GM12878 (cell line): ENCODE measurements at regions of chr4 and their contacts with region 1.

Region 1: GRCh38 chr4:2220016-2220630 is 21.8 kb downstream of the HAUS3 start:
- DNase-seq: peak; percentile 24
- ATAC-seq: peak; percentile 99
- H3K4me3 ChIP-seq: no peak overlapping the region
- H3K27ac ChIP-seq: no peak overlapping the region
- H3K4me1 ChIP-seq: no peaks in the 10 kb centered on the region
- H3K27me3 ChIP-seq: no peaks in the 10 kb centered on the region
- CTCF ChIP-seq: peak; percentile 93 to 95 (median 93)
- EP300 ChIP-seq: no peak
- POLR2A ChIP-seq: no peak
- RAD21 ChIP-seq: peak; percentile 97

Region 2: DNA sequence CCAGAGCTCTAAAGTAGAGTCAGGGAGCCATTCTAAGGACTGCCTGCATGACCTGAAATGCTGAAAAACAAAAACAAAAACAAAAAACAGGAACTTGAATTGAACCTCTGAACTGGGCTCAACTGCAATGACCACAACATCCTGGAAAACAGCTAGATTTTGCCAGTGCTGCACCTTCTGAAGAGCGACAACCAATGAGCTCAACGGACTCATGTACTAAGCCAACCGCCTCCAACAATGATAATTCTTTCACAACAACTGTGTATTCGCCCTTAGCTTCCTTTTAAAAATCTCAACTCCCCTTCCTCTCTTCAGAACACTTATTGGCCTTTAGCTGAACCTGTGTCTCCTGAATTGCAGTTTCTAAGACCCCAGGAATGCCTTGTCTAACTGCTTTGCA is 48.0 kb before region 1 on chr4:
- CTCF ChIA-PET with region 1: no interaction called
- POLR2A ChIA-PET with region 1: no interaction called
- RAD21 ChIA-PET with region 1: no interaction called
- SMC1A ChIA-PET with region 1: no interaction called
- in situ Hi-C with region 1: no loop called
- intact Hi-C with region 1: no loop called
- DNase-seq: no peak
- ATAC-seq: no peak
- H3K4me3 ChIP-seq: no peak overlapping the region
- H3K27ac ChIP-seq: no peak overlapping the region
- H3K4me1 ChIP-seq: no peaks in the 10 kb centered on the region
- H3K27me3 ChIP-seq: no peaks in the 10 kb centered on the region
- CTCF ChIP-seq: no peak
- EP300 ChIP-seq: no peak
- POLR2A ChIP-seq: no peak
- RAD21 ChIP-seq: no peak

Region 3: DNA sequence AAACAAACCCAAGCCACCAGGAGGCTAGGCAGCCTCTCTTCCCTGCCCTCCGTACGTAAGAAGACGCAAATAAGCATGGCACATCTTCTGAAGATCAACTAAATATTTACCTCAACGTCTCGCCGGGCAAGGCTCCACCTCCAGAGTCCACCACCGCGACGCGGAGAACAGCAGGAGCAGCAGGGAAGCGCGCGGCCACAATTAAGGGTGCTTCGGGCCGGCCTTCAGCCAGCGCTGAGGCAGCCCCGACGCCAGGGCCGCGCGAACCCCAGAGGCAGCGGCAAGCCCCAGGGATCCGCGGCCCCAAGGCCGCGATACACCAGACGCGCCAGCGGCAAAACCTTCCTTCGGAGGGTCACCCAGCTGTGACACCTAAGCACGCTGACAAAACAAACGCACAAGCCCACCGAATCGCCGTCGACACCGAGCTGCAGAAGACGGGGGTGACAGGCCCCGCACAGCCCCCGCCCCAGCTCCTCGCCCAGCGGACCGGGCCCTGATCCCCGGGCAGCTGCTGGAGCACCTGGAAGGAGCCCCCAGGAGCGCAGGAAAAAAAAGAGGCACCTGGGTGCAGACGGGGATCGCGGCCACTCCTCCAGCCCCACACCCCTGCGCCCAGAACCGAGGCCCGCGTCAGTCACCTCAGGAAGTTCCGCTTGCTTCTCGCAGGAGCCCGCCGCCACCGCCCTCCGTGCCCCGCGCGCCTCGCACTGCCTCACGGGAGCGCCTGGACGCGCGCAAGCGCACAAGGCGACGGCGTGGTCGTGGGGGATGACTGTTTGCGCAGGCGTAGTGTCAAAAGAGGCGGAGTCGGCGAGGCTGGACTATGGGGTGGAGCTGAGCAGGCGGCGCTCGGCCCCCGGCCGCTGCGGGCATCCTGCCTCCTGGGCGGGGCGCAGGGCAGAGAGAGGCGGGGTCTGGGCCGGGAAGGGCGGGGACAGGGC is 21.6 kb after region 1 on chr4 and contains the starts of genes HAUS3 and POLN:
- CTCF ChIA-PET with region 1: interaction called, 52 read pairs
- POLR2A ChIA-PET with region 1: interaction called, 12 read pairs
- RAD21 ChIA-PET with region 1: interaction called, 10 read pairs
- SMC1A ChIA-PET with region 1: interaction called, 43 read pairs
- in situ Hi-C with region 1: no loop called
- intact Hi-C with region 1: no loop called
- DNase-seq: peak; percentile 94
- ATAC-seq: peak; percentile 95
- H3K4me3 ChIP-seq: peak within 1 kb of the TSS; percentile 78
- H3K27ac ChIP-seq: peak within 1 kb of the TSS; percentile 70
- H3K4me1 ChIP-seq: peaks cover 6% of the 10 kb centered on the region; the same call in 1 of the 2 replicates
- H3K27me3 ChIP-seq: no peaks in the 10 kb centered on the region
- CTCF ChIP-seq: no peak
- EP300 ChIP-seq: no peak
- POLR2A ChIP-seq: peak; percentile 92
- RAD21 ChIP-seq: no peak
- polyA plus RNA-seq, gene HAUS3: 4.2 to 7.3 TPM
- polyA plus RNA-seq, gene POLN: 0.09 TPM in 1 of 2 experiments, not detected in the other

Region 4: GRCh38 chr4:2354118-2354517 is 134.0 kb after region 1 on chr4:
- CTCF ChIA-PET with region 1: interaction called, 18 read pairs
- POLR2A ChIA-PET with region 1: no interaction called
- RAD21 ChIA-PET with region 1: interaction called, 3 read pairs
- SMC1A ChIA-PET with region 1: interaction called, 3 read pairs
- in situ Hi-C with region 1: no loop called
- intact Hi-C with region 1: loop called (anchors 1 kb)
- DNase-seq: no peak
- ATAC-seq: peak; percentile 31; the same call in 1 of the 3 replicates
- H3K4me3 ChIP-seq: no peak overlapping the region
- H3K27ac ChIP-seq: no peak overlapping the region
- H3K4me1 ChIP-seq: no peaks in the 10 kb centered on the region
- H3K27me3 ChIP-seq: no peaks in the 10 kb centered on the region
- CTCF ChIP-seq: peak; percentile 28 to 31 (median 28); a peak in 5 of 6 replicates
- EP300 ChIP-seq: no peak
- POLR2A ChIP-seq: no peak
- RAD21 ChIP-seq: peak; percentile 45; the same call in 1 of the 2 replicates

Region 5: GRCh38 chr4:2441393-2442174 is 221.5 kb after region 1 on chr4:
- CTCF ChIA-PET with region 1: interaction called, 23 read pairs
- POLR2A ChIA-PET with region 1: no interaction called
- RAD21 ChIA-PET with region 1: interaction called, 20 read pairs
- SMC1A ChIA-PET with region 1: interaction called, 7 read pairs
- in situ Hi-C with region 1: loop called (anchors 5 kb)
- intact Hi-C with region 1: loop called (anchors 1 kb)
- DNase-seq: peak; percentile 35
- ATAC-seq: peak; percentile 99
- H3K4me3 ChIP-seq: no peak overlapping the region
- H3K27ac ChIP-seq: no peak overlapping the region
- H3K4me1 ChIP-seq: peaks cover 3% of the 10 kb centered on the region; the same call in 1 of the 2 replicates
- H3K27me3 ChIP-seq: peaks cover 0 to 1% of the 10 kb centered on the region in 2 experiments; a peak in 2 of 4 replicates
- CTCF ChIP-seq: peak; percentile 91 to 99 (median 95)
- EP300 ChIP-seq: no peak
- POLR2A ChIP-seq: no peak
- RAD21 ChIP-seq: peak; percentile 83

Region 6: DNA sequence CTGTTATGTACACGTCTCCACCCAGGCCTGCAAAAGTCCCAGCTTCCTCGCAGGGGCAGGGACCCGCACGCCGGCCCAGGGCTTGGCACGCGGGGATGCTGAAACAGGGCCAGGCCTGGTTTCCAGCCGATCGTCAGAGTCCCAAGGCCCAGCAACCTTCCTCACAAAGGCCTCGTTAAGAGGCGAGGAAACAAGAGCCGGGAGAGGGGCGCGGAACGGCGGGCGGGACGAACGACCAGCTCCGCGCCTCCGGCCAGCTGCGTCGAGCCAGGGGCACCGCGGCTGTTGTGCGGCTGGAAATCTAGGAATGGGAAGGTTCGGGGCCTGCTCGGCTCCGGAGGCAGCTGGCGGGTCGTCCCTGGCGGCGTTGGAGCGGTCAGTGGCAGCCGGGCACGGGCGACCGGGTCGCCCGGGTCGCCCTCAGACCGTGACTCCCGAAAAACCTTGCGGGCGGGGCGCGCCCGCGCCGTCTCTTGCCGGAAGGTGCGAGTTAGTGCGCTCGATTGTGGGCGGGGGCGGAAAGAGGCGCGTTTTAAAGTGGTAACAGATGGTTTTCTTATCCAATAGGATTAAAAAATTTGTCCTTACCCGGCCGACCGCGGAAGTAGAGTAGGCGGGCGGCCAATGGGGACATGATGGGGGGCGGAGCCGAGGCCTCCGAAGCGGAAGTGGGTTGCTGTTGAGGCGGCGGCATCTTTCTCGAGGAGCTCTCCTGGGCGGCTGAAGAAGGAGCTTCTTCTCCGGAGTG is 248.5 kb after region 1 on chr4 and contains the start of gene RNF4:
- CTCF ChIA-PET with region 1: interaction called, 10 read pairs
- POLR2A ChIA-PET with region 1: no interaction called
- RAD21 ChIA-PET with region 1: interaction called, 7 read pairs
- SMC1A ChIA-PET with region 1: no interaction called
- in situ Hi-C with region 1: no loop called
- intact Hi-C with region 1: no loop called
- DNase-seq: peak; percentile 88
- ATAC-seq: peak; percentile 87
- H3K4me3 ChIP-seq: peak within 1 kb of the TSS; percentile 99
- H3K27ac ChIP-seq: peak within 1 kb of the TSS; percentile 98
- H3K4me1 ChIP-seq: peaks cover 3% of the 10 kb centered on the region
- H3K27me3 ChIP-seq: no peaks in the 10 kb centered on the region
- CTCF ChIP-seq: no peak
- EP300 ChIP-seq: no peak
- POLR2A ChIP-seq: peak; percentile 87
- RAD21 ChIP-seq: no peak
- polyA plus RNA-seq, gene RNF4: 34.9 to 53.2 TPM